Sigmoid colon (tissue), 7 donors: ENCODE measurements at regions of chr7 and their contacts with region 1.

Region 1: DNA sequence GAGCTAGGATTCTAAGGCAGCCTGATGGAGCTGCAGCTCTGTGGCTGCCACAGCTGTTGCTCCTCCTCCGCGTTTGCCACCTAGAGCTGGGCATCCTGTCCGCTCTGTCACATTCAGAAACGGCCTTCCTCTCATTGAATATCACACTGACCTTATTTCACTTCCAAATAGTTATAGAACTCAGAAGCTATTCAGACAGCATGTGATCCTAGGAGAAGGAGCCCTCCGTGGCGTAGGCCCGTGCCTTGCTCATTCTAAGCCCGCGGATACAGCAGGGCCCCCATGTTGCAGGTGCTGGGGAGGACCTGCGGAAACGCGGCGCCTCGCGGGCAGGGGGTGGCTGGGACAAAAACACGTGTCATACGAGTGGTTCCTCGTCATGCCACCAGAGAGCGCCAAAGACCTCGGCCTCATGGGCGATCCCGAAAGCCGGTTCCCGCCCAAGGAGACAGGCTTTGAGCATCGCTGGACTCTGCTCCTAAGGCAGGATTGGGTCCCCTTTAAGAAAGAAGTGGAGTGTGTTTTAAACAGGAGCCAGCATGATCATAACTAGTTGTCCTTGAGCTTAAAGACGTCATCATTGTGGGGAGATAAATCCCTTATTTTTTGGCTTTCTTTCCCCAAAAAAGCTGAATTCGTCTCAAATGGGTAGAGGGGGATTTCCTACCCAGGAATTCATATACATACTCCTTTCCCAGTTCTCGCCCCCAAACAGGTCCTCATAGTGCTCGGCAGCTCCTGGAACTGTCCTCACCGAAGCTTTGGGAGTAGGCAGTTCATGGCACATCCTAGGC is 17.9 kb upstream of the FIGNL1 start:
- DNase-seq: peak; percentile 93
- H3K4me3 ChIP-seq: peak overlapping the region in 2 of 4 donors; percentile 16 to 24
- H3K27ac ChIP-seq: peak overlapping the region in 1 of 4 donors; percentile 24
- H3K4me1 ChIP-seq: peaks cover 0 to 13% (median 10%) of the 10 kb centered on the region in 4 donors
- H3K27me3 ChIP-seq: peaks cover 0 to 4% (median 0%) of the 10 kb centered on the region in 3 donors
- CTCF ChIP-seq: peak; percentile 79 to 92 (median 86)
- EP300 ChIP-seq: no peak
- POLR2A ChIP-seq: no peak

Region 2: GRCh38 chr7:49137978-49138377 is 1330.0 kb before region 1 on chr7:
- intact Hi-C with region 1: no loop called
- DNase-seq: no peak
- H3K4me3 ChIP-seq: no peak overlapping the region
- H3K27ac ChIP-seq: no peak overlapping the region
- H3K4me1 ChIP-seq: no peaks in the 10 kb centered on the region
- H3K27me3 ChIP-seq: no peaks in the 10 kb centered on the region
- CTCF ChIP-seq: no peak
- EP300 ChIP-seq: no peak
- POLR2A ChIP-seq: no peak

Region 3: DNA sequence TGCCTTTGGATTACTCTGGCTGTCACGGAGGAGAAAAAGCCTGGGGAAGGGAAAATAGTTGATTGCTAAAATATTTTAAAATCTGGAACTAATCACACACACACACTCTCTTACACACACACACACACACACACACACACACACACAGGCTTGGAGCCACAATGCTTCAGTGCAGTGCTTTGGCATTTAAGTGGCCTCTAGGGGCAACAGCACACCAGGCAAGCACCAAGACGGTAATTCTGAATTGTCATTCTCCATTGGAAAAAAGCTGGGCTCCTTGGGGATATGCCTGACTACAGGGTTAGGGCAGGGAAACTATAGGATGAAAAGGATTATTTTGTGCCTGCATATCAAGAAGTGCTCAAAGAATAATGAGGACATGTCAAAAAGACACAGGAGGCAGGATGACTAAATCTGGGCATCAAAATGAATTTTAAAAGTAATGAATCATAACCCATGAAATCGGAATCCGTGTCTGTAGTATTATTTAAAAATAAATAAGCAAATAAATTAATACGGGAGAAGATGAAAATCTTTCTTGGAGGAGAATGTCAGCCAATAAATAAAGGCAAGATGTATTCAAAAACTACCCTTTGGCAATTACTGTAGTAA is 127.6 kb after region 1 on chr7:
- intact Hi-C with region 1: loop called (anchors 5 kb)
- DNase-seq: no peak
- H3K4me3 ChIP-seq: no peak overlapping the region
- H3K27ac ChIP-seq: peak overlapping the region in 1 of 4 donors; percentile 7
- H3K4me1 ChIP-seq: peaks cover 0 to 3% (median 1%) of the 10 kb centered on the region in 4 donors
- H3K27me3 ChIP-seq: no peaks in the 10 kb centered on the region
- CTCF ChIP-seq: peak in 3 of 4 experiments; percentile 30 to 73 (median 54)
- EP300 ChIP-seq: no peak
- POLR2A ChIP-seq: no peak

Region 4: DNA sequence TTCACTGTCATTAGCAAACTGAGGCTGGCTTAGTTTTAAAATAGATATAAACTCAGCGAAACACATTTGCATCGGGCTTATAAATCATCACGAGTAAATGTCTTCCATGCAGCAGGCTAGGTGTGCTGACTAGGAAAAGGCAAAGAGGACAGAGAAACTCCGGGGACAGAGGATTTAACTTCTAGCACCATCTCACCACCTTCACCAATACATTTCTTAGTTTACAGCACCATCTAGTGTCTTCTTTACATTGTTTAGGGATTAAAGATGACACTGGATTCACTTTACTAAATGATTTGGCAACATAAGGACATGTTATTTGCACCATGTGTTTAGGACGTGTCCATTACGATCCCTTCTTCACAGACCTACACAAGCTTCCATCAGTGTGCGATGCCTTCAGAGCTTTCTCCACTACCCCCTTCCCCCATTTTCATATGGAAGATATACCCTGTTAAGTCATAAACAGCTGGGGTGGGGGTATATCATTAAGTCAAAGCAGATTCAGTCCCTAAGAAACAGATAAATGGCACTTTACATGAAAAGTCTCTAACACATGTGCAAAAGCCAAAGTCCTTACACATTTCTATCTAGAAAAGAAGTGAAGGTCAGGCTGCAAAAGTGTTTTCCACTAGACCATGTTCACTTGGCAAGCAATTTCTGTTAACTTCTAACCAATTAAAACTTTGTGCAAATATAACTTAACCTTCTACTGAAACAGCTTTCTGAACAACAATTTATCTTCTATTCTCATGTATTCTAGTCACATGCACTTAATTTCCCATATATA is 211.4 kb after region 1 on chr7:
- intact Hi-C with region 1: loop called (anchors 2 kb)
- DNase-seq: no peak
- H3K4me3 ChIP-seq: no peak overlapping the region
- H3K27ac ChIP-seq: peak overlapping the region in 3 of 4 donors; percentile 76 to 91 (median 87)
- H3K4me1 ChIP-seq: peaks cover 0 to 87% (median 81%) of the 10 kb centered on the region in 4 donors
- H3K27me3 ChIP-seq: no peaks in the 10 kb centered on the region
- CTCF ChIP-seq: peak in 3 of 4 experiments; percentile 28 to 39 (median 36)
- EP300 ChIP-seq: no peak
- POLR2A ChIP-seq: no peak

Region 5: GRCh38 chr7:51067757-51068156 is 599.7 kb after region 1 on chr7:
- intact Hi-C with region 1: loop called (anchors 5 kb)
- DNase-seq: peak; percentile 76
- H3K4me3 ChIP-seq: no peak overlapping the region
- H3K27ac ChIP-seq: no peak overlapping the region
- H3K4me1 ChIP-seq: peaks cover 0 to 18% (median 4%) of the 10 kb centered on the region in 4 donors
- H3K27me3 ChIP-seq: no peaks in the 10 kb centered on the region
- CTCF ChIP-seq: peak; percentile 39 to 73 (median 71)
- EP300 ChIP-seq: no peak
- POLR2A ChIP-seq: no peak

Region 6: GRCh38 chr7:51141451-51142003 is 673.5 kb after region 1 on chr7:
- intact Hi-C with region 1: loop called (anchors 2 kb)
- DNase-seq: no peak
- H3K4me3 ChIP-seq: no peak overlapping the region
- H3K27ac ChIP-seq: peak overlapping the region in 1 of 4 donors; percentile 33
- H3K4me1 ChIP-seq: no peaks in the 10 kb centered on the region
- H3K27me3 ChIP-seq: no peaks in the 10 kb centered on the region
- CTCF ChIP-seq: peak; percentile 6 to 43 (median 28)
- EP300 ChIP-seq: no peak
- POLR2A ChIP-seq: no peak